ENCODE measurements at regions of chr15 and their contacts with region 1.

Region 1: GRCh38 chr15:84658080-84658787 is at the start of gene NMB:
- DNase-seq: peak; percentile 95
- H3K4me3 ChIP-seq: peak within 1 kb of the TSS; percentile 68
- H3K27ac ChIP-seq: peak within 1 kb of the TSS; percentile 60
- H3K4me1 ChIP-seq: peaks cover 43% of the 10 kb centered on the region
- CTCF ChIP-seq: peak; percentile 81
- total RNA-seq, gene NMB: 5.3 and 10.3 TPM in 2 replicates

Region 2: DNA sequence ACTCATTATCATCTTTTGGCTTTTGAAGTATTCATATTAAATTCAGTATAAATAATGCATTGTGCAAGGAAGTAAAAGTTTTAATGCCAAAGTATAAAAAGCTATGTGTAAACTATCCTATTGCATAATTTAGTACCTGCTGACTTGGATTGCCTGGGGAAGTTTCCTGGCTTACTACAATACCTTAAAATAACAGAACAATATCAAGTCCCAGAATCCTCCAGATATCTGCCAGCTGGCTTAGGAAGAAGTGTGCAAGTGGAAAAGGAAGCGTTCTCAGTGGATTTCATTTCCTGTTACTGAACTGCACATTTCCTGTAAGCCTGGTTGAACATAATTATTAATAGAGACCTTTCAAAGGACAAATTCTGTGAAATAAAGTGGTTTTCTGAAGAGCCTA is 767.6 kb before region 1 on chr15:
- CTCF ChIA-PET with region 1: no interaction called
- POLR2A ChIA-PET with region 1: no interaction called
- intact Hi-C with region 1: no loop called
- DNase-seq: no peak
- H3K4me3 ChIP-seq: no peak overlapping the region
- H3K27ac ChIP-seq: no peak overlapping the region
- H3K4me1 ChIP-seq: no peaks in the 10 kb centered on the region
- CTCF ChIP-seq: no peak

Region 3: DNA sequence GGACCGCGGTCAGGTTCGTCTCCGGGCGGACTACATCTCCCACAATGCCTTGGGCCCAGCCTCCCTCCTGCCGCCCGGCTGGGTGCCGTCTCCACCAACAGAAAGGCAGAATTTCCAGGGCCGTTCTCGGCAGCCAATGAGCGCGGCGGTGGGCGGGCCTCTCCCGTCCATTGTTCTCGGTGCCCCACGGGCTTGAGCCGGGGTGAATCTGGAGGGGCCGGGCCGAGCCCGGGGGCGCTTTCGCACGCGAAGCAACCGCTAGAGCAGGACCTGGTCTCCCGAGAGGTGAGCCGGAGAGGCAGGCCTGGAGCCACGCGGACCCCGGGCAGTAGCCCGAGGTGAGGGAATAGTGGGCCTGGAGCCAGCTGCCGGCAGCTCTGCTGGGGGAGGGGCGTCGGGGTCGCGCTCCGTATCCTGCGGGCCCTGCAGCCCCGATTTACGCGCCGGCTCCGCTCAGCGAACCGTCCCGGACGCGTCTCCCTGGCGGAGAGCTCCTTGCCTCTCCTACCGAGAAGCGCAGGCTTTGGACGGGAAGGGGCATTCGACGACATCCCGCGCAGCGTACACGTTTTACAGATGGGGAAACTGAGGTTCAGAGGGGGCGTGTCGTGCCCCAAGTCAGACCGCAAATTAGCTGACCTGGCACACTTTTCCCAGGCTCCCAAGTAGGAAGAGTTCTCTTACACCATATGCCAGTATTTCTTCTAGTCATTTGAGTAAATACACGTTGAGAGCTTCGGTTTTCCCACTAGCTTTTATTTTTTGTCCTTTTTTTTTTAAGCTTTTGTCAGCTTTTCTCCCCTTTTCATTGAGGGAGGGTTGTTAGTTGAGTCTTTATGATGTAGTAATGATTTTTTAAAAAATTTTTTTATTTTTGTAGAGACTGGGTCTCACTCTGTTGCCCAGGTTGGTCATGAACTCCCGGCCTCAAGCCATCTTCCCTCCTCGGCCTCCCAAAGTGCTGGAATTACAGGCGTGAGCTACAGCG is 57.1 kb before region 1 on chr15 and contains the start of gene ZSCAN2:
- CTCF ChIA-PET with region 1: interaction called, 5 read pairs
- POLR2A ChIA-PET with region 1: interaction called, 4 read pairs
- intact Hi-C with region 1: loop called (anchors 2 kb)
- DNase-seq: peak; percentile 93
- H3K4me3 ChIP-seq: peak within 1 kb of the TSS; percentile 83
- H3K27ac ChIP-seq: no peak within 1 kb of the TSS
- H3K4me1 ChIP-seq: peaks cover 47% of the 10 kb centered on the region
- CTCF ChIP-seq: no peak
- total RNA-seq, gene ZSCAN2: 12.4 and 21.7 TPM in 2 replicates

Region 4: DNA sequence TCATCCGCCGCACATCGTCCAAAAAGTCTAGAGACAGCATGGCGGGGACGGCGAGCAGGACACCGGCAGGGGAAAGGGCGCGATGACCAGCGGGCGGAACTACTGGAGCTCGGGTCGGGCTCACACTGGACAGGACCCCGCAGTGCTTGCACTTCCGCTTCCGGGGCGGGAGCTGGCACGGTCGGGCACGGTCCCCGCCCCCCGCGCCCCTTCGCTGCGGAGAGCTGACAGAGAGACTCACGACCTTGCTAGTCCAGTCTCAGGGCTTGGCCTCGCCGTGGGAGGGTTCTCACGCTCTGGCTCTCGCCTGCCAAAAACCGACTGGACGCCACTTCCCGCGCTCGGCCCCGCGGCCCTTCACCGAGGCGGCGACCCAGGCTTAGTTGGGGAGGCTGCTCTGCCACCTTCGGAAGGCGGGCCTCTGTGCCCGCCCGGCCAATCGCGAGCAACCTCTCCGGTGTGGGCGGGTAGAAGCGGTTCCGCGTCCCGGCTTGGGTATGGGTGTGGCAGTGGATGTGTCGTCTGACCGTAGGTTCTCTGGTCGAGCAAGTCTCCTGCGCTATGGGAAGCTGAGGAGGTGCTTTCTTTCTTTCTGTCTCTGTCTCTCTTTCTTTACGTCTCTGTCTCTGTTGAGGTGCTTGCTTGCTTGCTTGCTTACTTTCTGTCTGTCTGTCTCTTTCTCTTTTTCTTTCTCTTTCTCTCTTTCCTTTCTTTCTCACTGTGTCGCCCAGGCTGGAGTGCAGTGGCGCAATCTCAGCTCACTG is 58.0 kb after region 1 on chr15 and contains the start of gene SEC11A:
- CTCF ChIA-PET with region 1: interaction called, 4 read pairs
- POLR2A ChIA-PET with region 1: interaction called, 7 read pairs
- intact Hi-C with region 1: loop called (anchors 2 kb)
- DNase-seq: peak; percentile 96
- H3K4me3 ChIP-seq: peak within 1 kb of the TSS; percentile 89
- H3K27ac ChIP-seq: peak within 1 kb of the TSS; percentile 59
- H3K4me1 ChIP-seq: peaks cover 32% of the 10 kb centered on the region
- CTCF ChIP-seq: no peak
- total RNA-seq, gene SEC11A: 41.4 and 47.0 TPM in 2 replicates

Region 5: DNA sequence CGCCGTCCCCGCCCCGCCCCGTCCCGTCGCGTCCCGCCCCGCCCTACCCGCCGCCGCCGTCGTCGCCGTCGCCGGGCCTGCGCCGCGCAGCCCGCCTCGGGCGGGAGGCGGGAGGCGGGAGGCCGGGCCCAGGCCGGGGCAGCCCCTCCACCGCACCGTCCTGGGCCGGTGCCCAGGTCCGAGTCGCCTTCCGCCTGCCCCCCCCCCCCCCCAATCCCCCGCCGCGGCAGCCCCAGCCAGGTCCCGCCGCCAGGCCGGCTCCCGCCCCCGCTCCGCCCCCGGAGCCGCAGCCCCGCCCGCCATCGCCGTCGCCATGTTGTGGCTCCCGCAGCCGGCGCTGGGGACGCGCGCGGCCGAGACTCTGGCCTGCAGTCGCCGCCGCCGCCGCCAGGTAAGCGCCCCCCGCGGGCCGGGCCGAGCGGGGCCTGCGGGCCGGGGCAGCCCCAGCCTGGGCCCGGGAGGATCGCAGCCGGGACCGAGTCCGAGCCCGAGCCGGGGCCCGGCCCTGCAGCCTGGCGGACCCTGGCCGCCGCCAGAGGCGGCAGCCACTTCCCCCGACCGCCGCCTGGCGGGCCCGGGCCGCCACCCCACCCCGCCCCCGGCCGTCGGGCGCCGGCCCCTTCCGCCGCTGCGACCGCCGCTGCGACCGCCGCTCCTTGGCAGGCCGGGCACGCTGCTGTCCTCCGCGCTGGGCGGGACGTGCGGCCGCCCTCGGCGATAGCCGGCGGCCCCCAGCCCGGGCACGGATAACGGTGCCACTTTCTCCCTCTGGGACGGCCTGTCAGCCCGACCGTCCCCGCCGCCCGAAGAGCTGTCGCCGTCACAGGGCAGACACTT is 90.3 kb after region 1 on chr15 and contains the start of gene ZNF592:
- CTCF ChIA-PET with region 1: no interaction called
- POLR2A ChIA-PET with region 1: interaction called, 6 read pairs
- intact Hi-C with region 1: loop called (anchors 1 kb)
- DNase-seq: peak; percentile 84
- H3K4me3 ChIP-seq: peak within 1 kb of the TSS; percentile 95
- H3K27ac ChIP-seq: peak within 1 kb of the TSS; percentile 82
- H3K4me1 ChIP-seq: peaks cover 57% of the 10 kb centered on the region
- CTCF ChIP-seq: 0 out of 2 replicates have a peak, but pooled peaks have one; percentile 6
- total RNA-seq, gene ZNF592: 17.1 and 23.0 TPM in 2 replicates

Region 6: DNA sequence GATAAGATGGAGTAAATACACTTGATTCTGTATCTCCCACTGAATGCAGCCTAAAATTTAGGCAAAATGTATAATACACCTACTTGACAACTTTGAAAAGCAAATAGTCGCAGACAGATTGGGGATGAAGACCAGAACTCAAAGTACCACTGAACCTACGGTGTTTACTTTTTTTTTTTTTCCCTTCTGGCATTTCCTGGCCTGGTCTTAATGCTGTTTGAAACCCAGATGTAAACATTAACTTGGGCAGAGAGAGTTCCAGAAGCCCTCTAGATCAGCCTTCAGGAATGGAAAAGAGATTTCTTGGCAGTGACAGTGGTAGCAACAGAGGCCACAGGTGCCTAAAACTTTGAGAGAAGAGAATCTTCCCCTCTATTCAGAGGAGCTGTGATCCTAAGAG is 186.7 kb after region 1 on chr15:
- CTCF ChIA-PET with region 1: no interaction called
- POLR2A ChIA-PET with region 1: no interaction called
- intact Hi-C with region 1: no loop called
- DNase-seq: no peak
- H3K4me3 ChIP-seq: no peak overlapping the region
- H3K27ac ChIP-seq: no peak overlapping the region
- H3K4me1 ChIP-seq: no peaks in the 10 kb centered on the region
- CTCF ChIP-seq: no peak

Region 7: DNA sequence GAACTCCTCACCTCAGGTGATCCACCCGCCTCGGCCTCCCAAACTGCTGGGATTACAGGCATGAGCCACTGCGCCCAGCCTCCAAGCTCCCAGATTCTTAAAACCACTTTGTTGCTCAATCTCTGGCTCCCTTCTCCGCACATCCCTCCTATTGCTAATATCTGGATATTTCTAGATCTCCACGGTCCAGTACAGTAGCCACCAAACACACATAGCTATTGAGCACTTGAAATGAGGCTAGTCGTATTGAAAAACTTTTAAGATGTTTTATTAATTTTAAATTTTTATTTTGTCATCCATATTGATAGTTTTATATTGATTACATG is 270.6 kb after region 1 on chr15:
- CTCF ChIA-PET with region 1: no interaction called
- POLR2A ChIA-PET with region 1: interaction called, 9 read pairs
- intact Hi-C with region 1: loop called (anchors 1 kb)
- DNase-seq: no peak
- H3K4me3 ChIP-seq: no peak overlapping the region
- H3K27ac ChIP-seq: no peak overlapping the region
- H3K4me1 ChIP-seq: peaks cover 5% of the 10 kb centered on the region
- CTCF ChIP-seq: no peak

Region 8: DNA sequence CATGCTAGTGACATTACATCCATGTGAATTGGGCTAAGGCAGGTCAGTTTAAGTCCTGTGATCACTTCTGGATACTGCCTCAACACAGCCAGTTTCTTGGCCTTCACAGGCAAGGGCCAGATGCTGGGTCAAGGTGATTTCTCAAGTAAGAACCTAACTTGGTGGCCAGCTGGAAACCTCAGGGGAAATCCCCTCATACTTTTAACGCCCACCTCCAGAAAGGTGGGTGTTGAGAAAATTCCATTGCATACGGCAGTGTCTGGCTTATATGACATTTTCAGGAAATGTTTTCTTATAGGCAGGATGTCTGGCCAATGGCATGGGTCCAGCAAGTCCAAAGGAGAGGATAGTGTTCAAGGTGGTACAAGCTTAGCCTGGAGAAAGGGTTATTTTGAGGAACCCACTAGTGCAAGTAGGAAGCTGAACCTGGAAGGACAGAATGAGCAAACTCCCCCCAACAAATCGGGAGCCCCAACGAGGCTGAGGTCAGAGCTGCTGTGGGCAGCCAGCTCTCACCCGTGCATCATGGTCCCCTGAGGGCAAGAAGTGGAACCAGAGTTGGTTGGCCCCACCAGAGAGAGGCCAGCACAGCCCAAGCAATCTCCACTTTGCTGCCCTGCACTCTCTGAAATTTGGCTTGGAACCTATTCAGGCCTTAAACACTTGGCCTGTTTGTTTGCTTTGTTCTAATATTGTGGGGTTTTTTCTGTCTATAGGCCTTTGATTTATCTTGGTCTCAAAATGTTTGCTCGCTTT is 458.9 kb after region 1 on chr15:
- CTCF ChIA-PET with region 1: no interaction called
- POLR2A ChIA-PET with region 1: no interaction called
- intact Hi-C with region 1: no loop called
- DNase-seq: no peak
- H3K4me3 ChIP-seq: no peak overlapping the region
- H3K27ac ChIP-seq: no peak overlapping the region
- H3K4me1 ChIP-seq: no peaks in the 10 kb centered on the region
- CTCF ChIP-seq: no peak

Measured in OCI-LY7 (cell line).